ENCODE measurements at regions of chr1 and their contacts with region 1.

Region 1: GRCh38 chr1:23539698-23540266 is 8.7 kb upstream of the E2F2 start:
- DNase-seq: peak; percentile 98
- ATAC-seq: peak; percentile 91
- H3K4me3 ChIP-seq: peak overlapping the region in 1 of 5 experiments; percentile 5
- H3K4me3 Mint-ChIP-seq: peak overlapping the region; percentile 73
- H3K27ac ChIP-seq: no peak overlapping the region
- H3K27ac Mint-ChIP-seq: peak overlapping the region; percentile 79
- H3K4me1 ChIP-seq: peaks cover 18 to 26% of the 10 kb centered on the region in 2 donors
- H3K4me1 Mint-ChIP-seq: peaks cover 29% of the 10 kb centered on the region
- H3K27me3 ChIP-seq: no peaks in the 10 kb centered on the region
- H3K27me3 Mint-ChIP-seq: no peaks in the 10 kb centered on the region
- CTCF ChIP-seq: peak; percentile 91

Region 2: DNA sequence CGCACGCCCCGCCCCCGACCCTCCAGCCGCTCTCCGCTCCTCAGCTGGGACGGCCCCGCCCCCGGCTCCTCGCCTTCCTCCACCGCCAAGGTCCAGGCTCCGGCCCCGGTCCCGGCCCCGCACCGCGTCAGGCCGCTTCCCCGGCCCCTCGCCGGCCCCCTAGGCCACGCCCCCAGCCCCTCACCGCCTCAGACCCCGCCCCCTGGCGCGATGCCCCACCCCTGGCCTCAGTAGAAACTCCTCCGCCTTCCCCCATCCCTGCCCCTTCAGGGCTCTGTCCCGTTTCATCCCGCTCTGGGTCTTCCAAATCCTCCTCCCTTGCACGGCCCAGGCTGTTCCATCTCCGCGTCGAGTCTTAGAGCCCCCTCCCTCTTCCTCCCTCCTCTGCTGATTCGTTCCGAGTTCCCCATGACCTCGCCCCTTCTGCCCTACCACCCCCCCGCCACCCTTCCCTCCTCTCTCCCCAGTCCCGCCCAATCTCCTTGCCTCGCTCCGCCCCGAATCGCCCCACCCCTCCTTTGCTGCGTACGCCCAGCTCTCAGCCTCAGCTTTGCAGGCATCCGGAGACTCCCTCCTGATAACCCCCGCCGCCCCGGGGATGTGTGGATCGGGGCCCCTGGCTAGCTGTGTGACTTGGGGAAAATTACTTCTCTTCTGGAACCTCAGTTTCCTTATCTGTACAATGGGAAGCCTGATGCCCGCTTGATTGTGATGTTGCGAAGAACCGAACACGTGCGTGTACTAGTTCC is 55.4 kb before region 1 on chr1:
- CTCF ChIA-PET with region 1: interaction called, 18 read pairs
- POLR2A ChIA-PET with region 1: interaction called, 4 read pairs
- intact Hi-C with region 1: no loop called
- DNase-seq: peak; percentile 94
- ATAC-seq: peak; percentile 85
- H3K4me3 ChIP-seq: peak overlapping the region in 4 of 5 experiments; percentile 43 to 79 (median 66)
- H3K4me3 Mint-ChIP-seq: peak overlapping the region; percentile 90
- H3K27ac ChIP-seq: no peak overlapping the region
- H3K27ac Mint-ChIP-seq: peak overlapping the region; percentile 82
- H3K4me1 ChIP-seq: peaks cover 14 to 23% of the 10 kb centered on the region in 2 donors
- H3K4me1 Mint-ChIP-seq: peaks cover 29% of the 10 kb centered on the region
- H3K27me3 ChIP-seq: peaks cover 0 to 22% (median 8%) of the 10 kb centered on the region in 4 experiments
- H3K27me3 Mint-ChIP-seq: peaks cover 25% of the 10 kb centered on the region
- CTCF ChIP-seq: peak; percentile 2

Region 3: GRCh38 chr1:23559136-23559984 is 19.6 kb after region 1 on chr1 and contains the start of gene ID3:
- CTCF ChIA-PET with region 1: interaction called, 74 read pairs
- POLR2A ChIA-PET with region 1: interaction called, 17 read pairs
- intact Hi-C with region 1: no loop called
- DNase-seq: peak; percentile 97
- ATAC-seq: peak; percentile 73
- H3K4me3 ChIP-seq: peak within 1 kb of the TSS; percentile 87 to 100 (median 95)
- H3K4me3 Mint-ChIP-seq: peak within 1 kb of the TSS; percentile 93
- H3K27ac ChIP-seq: peak within 1 kb of the TSS; percentile 83 to 91
- H3K27ac Mint-ChIP-seq: peak within 1 kb of the TSS; percentile 94
- H3K4me1 ChIP-seq: peaks cover 66 to 75% of the 10 kb centered on the region in 2 donors
- H3K4me1 Mint-ChIP-seq: peaks cover 72% of the 10 kb centered on the region
- H3K27me3 ChIP-seq: no peaks in the 10 kb centered on the region
- H3K27me3 Mint-ChIP-seq: no peaks in the 10 kb centered on the region
- CTCF ChIP-seq: no peak
- total RNA-seq, gene ID3: 367 and 370 TPM in 2 replicates

Region 4: DNA sequence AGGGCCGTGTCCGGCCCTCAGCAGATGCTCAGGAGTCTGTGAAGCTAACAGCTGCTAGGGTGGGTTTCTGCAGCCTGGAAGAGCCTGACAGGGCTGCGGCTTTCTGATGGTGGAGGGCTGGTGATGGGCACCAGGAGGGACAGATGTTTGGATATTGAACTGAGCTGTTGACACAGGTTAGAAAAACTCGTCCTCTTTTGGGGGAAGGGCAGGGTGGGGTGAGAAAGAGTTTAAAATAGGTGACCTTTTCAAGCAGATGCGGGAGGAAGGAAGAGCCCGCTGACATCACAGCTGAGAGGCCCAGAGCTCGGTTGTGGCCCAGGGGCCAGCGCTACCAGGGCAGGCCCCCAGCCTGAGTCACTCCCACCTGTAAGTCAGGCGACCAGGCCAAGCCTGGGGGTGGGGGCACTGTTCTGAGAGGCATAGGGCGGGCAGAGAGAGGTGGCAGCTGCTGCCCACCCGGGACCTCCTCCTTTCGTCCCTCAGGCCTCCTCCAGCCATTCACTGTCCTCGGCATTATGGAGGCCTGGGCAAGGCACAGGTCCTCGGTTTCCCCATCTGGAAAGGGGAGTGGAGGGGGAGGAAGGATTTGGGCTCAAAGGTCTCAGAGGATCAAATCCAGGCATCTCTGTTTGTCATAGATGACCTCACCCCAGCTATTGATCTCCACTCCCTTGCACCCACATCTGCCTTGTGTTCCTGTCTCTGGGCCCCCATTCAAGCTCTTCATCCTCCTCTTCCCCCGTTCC is 51.9 kb after region 1 on chr1:
- CTCF ChIA-PET with region 1: interaction called, 29 read pairs
- POLR2A ChIA-PET with region 1: interaction called, 3 read pairs
- intact Hi-C with region 1: no loop called
- DNase-seq: peak; percentile 62
- ATAC-seq: peak; percentile 85
- H3K4me3 ChIP-seq: peak overlapping the region in 1 of 5 experiments; percentile 31
- H3K4me3 Mint-ChIP-seq: peak overlapping the region; percentile 81
- H3K27ac ChIP-seq: peak overlapping the region; percentile 81 to 83
- H3K27ac Mint-ChIP-seq: peak overlapping the region; percentile 96
- H3K4me1 ChIP-seq: peaks cover 84 to 85% of the 10 kb centered on the region in 2 donors
- H3K4me1 Mint-ChIP-seq: peaks cover 86% of the 10 kb centered on the region
- H3K27me3 ChIP-seq: no peaks in the 10 kb centered on the region
- H3K27me3 Mint-ChIP-seq: no peaks in the 10 kb centered on the region
- CTCF ChIP-seq: no peak

Region 5: DNA sequence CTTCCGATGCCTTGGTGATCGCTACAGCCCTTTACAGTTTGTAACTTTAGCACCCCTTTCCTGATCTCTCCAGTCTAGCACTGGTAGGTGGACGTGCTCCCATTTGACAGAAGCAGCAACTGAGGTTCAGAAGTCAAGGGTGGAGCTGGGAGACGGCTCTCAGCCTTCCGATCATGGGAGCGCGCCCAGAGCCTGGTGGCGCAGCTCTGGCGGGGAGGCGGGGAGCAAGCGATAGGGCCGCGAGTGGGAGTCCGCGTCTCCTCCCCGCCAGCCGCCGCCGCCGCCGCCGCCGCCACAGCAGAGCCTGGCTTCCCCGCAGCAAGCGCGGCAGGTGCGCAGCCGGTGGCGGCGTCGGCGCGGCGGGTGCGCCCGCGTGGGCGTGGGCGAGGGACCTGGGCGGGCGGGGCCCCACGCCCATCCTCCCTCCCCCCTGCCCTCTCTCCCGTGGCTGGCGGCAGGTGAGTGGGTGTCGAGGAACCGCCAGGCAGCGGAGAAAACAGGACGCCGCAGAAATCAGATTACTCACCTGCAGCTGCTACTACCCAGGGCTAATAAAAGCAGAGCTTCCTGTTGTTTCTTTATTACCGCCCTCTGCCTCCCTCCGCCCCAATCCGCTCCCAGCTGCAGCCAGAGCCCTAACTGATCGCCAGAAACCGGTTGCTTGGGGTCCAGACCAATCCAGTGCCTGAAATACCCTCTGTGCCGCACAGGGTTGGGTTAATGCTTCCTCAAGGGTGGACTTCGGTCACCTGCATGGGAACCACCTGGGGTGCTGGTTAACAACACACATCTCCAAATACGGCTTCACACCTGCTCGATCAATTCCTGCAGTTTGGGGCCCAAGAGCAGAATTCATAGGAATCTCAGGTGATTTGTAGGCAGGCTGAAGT is 79.8 kb after region 1 on chr1:
- CTCF ChIA-PET with region 1: interaction called, 46 read pairs
- POLR2A ChIA-PET with region 1: interaction called, 3 read pairs
- intact Hi-C with region 1: no loop called
- DNase-seq: peak; percentile 89
- ATAC-seq: peak; percentile 88
- H3K4me3 ChIP-seq: peak overlapping the region in 4 of 5 experiments; percentile 29 to 59 (median 50)
- H3K4me3 Mint-ChIP-seq: peak overlapping the region; percentile 82
- H3K27ac ChIP-seq: peak overlapping the region; percentile 93 to 94
- H3K27ac Mint-ChIP-seq: peak overlapping the region; percentile 98
- H3K4me1 ChIP-seq: peaks cover 77 to 93% of the 10 kb centered on the region in 2 donors
- H3K4me1 Mint-ChIP-seq: peaks cover 87% of the 10 kb centered on the region
- H3K27me3 ChIP-seq: no peaks in the 10 kb centered on the region
- H3K27me3 Mint-ChIP-seq: no peaks in the 10 kb centered on the region
- CTCF ChIP-seq: no peak

Region 6: GRCh38 chr1:23664837-23665795 is 125.3 kb after region 1 on chr1:
- CTCF ChIA-PET with region 1: interaction called, 4 read pairs
- POLR2A ChIA-PET with region 1: interaction called, 5 read pairs
- intact Hi-C with region 1: loop called (anchors 1 kb)
- DNase-seq: peak; percentile 46
- ATAC-seq: no peak
- H3K4me3 ChIP-seq: no peak overlapping the region
- H3K4me3 Mint-ChIP-seq: no peak overlapping the region
- H3K27ac ChIP-seq: no peak overlapping the region
- H3K27ac Mint-ChIP-seq: no peak overlapping the region
- H3K4me1 ChIP-seq: no peaks in the 10 kb centered on the region
- H3K4me1 Mint-ChIP-seq: peaks cover 5% of the 10 kb centered on the region
- H3K27me3 ChIP-seq: peaks cover 0 to 2% (median 0%) of the 10 kb centered on the region in 4 experiments
- H3K27me3 Mint-ChIP-seq: no peaks in the 10 kb centered on the region
- CTCF ChIP-seq: peak; percentile 54

Region 7: DNA sequence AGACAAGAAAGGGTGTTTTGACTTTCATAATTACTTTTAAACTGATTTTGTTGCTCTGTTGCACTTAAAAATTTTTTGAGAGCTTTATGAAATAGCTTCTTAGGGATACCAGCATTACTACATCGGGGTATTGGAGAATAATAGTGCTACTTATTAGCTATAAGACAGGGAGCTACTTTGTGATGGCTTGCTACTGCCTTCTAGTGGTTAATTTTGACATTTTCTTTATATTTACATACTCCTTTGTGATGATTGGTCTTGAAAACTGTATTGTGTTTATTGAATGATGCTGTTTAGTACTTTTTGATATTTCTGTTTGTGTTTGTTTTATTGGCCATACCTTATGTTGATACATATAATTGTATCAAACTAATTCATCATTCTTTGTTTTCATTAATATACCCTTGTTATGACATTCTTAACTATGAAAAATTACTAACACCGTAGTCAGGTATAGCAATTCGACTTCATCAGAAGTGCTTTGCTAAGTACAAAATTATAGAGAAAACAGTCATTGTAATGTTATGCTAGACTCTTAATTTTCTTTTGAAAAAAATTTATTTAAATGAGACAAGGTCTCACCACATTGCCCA is 1291.0 kb after region 1 on chr1:
- CTCF ChIA-PET with region 1: no interaction called
- POLR2A ChIA-PET with region 1: no interaction called
- intact Hi-C with region 1: no loop called
- DNase-seq: peak; percentile 78
- ATAC-seq: peak; percentile 82
- H3K4me3 ChIP-seq: no peak overlapping the region
- H3K4me3 Mint-ChIP-seq: no peak overlapping the region
- H3K27ac ChIP-seq: no peak overlapping the region
- H3K27ac Mint-ChIP-seq: no peak overlapping the region
- H3K4me1 ChIP-seq: peaks cover 13 to 24% of the 10 kb centered on the region in 2 donors
- H3K4me1 Mint-ChIP-seq: peaks cover 51% of the 10 kb centered on the region
- H3K27me3 ChIP-seq: no peaks in the 10 kb centered on the region
- H3K27me3 Mint-ChIP-seq: no peaks in the 10 kb centered on the region
- CTCF ChIP-seq: peak; percentile 98

Measured in B cell (primary cell).